Activated B cell treated with CpG ODN at 0.5 μM for 24 hours (primary cell): ENCODE measurements at regions of chr3 and their contacts with region 1.

Region 1: GRCh38 chr3:66998113-66998903 is at the start of gene KBTBD8:
- DNase-seq: peak; percentile 88
- ATAC-seq: peak; percentile 88
- H3K4me3 Mint-ChIP-seq: peak within 1 kb of the TSS; percentile 88
- H3K27ac Mint-ChIP-seq: peak within 1 kb of the TSS; percentile 93
- H3K4me1 Mint-ChIP-seq: peaks cover 47% of the 10 kb centered on the region
- H3K27me3 Mint-ChIP-seq: peaks cover 3% of the 10 kb centered on the region
- CTCF ChIP-seq: no peak
- total RNA-seq, gene KBTBD8: 45.4 and 53.3 TPM in 2 replicates

Region 2: DNA sequence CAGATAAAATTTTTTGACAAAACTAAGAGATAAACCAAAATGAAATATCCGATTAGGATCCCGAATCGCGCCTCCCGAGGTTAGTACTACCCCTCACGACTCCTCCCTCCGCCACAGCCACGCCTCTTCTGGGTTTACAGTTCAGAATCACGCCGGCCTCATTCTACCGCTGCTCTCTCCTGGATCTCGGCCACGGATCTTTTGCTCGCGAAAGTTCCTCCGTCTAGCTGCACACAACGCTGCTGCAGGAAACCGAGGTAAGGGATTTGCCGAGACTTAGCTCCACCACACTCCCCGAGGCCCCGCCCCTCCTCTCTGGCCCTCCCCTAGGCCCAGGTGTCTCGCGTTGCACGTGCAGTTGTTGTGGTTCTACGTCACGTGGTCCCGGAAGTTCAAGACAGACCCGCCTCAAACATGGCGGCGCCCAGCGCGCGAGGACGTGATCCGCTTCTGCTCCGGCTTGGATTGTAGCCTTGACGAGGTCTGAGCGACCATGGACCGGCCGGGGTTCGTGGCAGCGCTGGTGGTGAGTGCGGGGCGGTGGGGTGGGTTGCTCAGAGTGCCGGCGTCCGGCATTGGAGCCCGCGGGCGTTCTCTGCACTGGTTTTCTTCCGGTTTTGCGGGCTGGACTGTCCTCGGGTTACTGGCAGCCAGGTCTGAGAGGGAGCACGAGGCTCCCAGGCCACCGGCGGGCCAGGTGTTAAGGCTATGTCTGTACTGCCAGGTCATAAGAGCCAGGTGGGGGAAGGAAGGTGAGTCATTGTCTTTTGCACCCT is 777.5 kb before region 1 on chr3 and contains the start of gene SLC25A26:
- CTCF ChIA-PET with region 1: no interaction called
- POLR2A ChIA-PET with region 1: no interaction called
- intact Hi-C with region 1: loop called (anchors 1 kb)
- DNase-seq: peak; percentile 90
- ATAC-seq: peak; percentile 96
- H3K4me3 Mint-ChIP-seq: peak within 1 kb of the TSS; percentile 98
- H3K27ac Mint-ChIP-seq: peak within 1 kb of the TSS; percentile 93
- H3K4me1 Mint-ChIP-seq: peaks cover 40% of the 10 kb centered on the region
- H3K27me3 Mint-ChIP-seq: peaks cover 3% of the 10 kb centered on the region
- CTCF ChIP-seq: no peak
- total RNA-seq, gene SLC25A26: 20.8 and 23.2 TPM in 2 replicates

Region 3: DNA sequence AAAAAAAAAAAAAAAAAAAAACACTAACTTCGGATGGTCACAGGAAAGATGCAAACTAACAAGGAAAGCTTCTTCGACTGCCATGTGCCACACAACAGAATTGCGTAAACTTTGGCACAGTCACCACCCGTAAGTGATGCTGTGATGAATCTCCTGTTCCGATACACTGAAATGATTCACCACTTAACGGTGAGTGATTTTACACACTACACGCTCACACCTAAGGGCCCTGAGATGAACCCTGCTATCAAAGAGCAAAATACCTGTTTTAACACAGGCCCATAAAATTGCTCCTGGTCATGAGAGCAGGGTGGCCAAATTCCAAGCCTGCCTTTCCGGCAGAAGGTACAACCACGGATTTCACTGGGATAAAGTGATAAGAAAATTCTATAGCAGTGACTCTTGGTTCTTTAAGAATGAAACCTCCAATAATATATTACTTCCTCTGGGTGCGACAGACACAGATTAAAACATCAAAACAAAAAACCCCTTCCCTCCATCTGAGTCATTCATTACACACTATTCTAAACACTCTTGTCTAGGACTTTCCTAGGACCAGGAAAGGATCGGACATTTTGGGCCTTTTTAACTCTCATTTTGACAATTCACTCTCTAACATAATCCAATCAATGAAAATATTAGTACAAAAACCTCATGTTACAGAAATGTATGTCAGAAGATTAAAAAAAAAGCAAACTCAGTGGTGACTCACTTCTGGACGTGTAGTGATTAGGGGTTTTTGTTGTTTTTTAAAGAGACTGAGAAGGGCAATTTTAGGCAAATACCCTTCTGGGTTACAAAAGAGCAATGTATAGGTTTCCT is 525.8 kb before region 1 on chr3:
- CTCF ChIA-PET with region 1: no interaction called
- POLR2A ChIA-PET with region 1: no interaction called
- intact Hi-C with region 1: loop called (anchors 10 kb)
- DNase-seq: peak; percentile 32
- ATAC-seq: peak; percentile 87
- H3K4me3 Mint-ChIP-seq: peak overlapping the region; percentile 71
- H3K27ac Mint-ChIP-seq: peak overlapping the region; percentile 95
- H3K4me1 Mint-ChIP-seq: peaks cover 58% of the 10 kb centered on the region
- H3K27me3 Mint-ChIP-seq: peaks cover 10% of the 10 kb centered on the region
- CTCF ChIP-seq: no peak

Region 4: DNA sequence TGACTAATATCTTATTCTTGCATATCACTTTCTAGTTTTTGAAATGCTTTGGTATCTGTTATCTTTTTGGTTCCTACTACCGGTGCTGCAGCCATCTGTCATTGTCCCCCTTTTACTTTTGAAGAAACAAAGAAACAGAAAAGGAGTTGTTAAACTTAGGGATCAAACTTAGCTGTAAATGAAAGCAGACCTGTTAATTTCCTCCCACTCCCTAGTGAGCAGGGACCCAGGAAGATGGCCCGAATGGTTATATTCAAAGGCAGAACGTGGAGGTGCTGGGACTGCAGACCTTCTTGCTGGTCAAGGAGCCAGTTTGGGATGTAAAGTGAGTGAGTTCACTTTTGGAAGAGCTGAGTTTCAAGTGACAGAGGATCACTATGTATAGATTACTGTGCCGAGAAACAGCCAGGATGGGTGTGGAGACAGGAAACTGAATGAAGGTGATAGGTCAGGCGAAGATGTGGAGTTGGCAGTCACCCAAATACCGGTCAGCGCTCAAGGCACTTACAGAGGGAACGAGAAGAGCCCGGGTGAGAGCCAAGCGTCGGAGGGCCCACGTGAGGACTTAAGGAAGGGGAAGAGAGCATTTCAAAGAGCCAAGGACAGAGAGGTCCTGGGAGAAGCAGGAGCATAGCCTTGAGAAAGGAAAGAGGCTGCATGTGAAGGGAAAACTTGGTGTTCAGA is 19.9 kb after region 1 on chr3:
- CTCF ChIA-PET with region 1: interaction called, 3 read pairs
- POLR2A ChIA-PET with region 1: interaction called, 18 read pairs
- intact Hi-C with region 1: loop called (anchors 1 kb)
- DNase-seq: no peak
- ATAC-seq: peak; percentile 38
- H3K4me3 Mint-ChIP-seq: peak overlapping the region; percentile 52
- H3K27ac Mint-ChIP-seq: peak overlapping the region; percentile 69
- H3K4me1 Mint-ChIP-seq: peaks cover 55% of the 10 kb centered on the region
- H3K27me3 Mint-ChIP-seq: no peaks in the 10 kb centered on the region
- CTCF ChIP-seq: no peak

Region 5: DNA sequence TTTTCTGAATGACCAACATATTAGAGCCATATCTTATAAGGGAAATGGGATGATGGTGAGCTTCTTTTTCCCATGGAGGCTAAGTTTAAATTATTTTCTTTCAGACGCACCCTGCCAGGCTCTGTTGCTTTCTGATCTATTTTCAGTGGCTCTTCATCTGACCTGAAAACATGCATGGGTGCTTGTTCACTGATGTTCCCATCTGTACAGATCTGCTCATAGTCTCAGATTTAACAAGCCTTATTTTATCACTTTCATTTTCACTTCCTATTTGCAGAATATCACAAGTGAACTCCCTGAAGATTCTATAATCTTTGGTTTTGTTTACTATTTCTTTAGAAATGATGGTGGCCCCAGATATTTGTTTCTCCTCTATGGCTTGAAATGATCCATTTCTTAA is 687.2 kb after region 1 on chr3:
- CTCF ChIA-PET with region 1: no interaction called
- POLR2A ChIA-PET with region 1: no interaction called
- intact Hi-C with region 1: loop called (anchors 5 kb)
- DNase-seq: no peak
- ATAC-seq: peak; percentile 91
- H3K4me3 Mint-ChIP-seq: peak overlapping the region; percentile 68
- H3K27ac Mint-ChIP-seq: peak overlapping the region; percentile 91
- H3K4me1 Mint-ChIP-seq: peaks cover 36% of the 10 kb centered on the region
- H3K27me3 Mint-ChIP-seq: no peaks in the 10 kb centered on the region
- CTCF ChIP-seq: no peak